ENCODE measurements at regions of chr4 and their contacts with region 1.

Region 1: GRCh38 chr4:112532267-112532666 is 16.3 kb upstream of the NEUROG2 start:
- DNase-seq: peak; percentile 19
- H3K4me3 ChIP-seq: no peak overlapping the region
- H3K27ac ChIP-seq: no peak overlapping the region
- H3K4me1 ChIP-seq: no peaks in the 10 kb centered on the region
- H3K27me3 ChIP-seq: no peaks in the 10 kb centered on the region
- CTCF ChIP-seq: no peak

Region 2: GRCh38 chr4:112075129-112075753 is 457.0 kb before region 1 on chr4:
- CTCF ChIA-PET with region 1: no interaction called
- dilution Hi-C with region 1: no loop called
- in situ Hi-C with region 1: loop called in 1 of 2 experiments (anchors 25 kb)
- intact Hi-C with region 1: no loop called
- DNase-seq: peak; percentile 59
- H3K4me3 ChIP-seq: no peak overlapping the region
- H3K27ac ChIP-seq: no peak overlapping the region
- H3K4me1 ChIP-seq: peaks cover 4% of the 10 kb centered on the region
- H3K27me3 ChIP-seq: no peaks in the 10 kb centered on the region
- CTCF ChIP-seq: peak; percentile 74 to 81

Region 3: DNA sequence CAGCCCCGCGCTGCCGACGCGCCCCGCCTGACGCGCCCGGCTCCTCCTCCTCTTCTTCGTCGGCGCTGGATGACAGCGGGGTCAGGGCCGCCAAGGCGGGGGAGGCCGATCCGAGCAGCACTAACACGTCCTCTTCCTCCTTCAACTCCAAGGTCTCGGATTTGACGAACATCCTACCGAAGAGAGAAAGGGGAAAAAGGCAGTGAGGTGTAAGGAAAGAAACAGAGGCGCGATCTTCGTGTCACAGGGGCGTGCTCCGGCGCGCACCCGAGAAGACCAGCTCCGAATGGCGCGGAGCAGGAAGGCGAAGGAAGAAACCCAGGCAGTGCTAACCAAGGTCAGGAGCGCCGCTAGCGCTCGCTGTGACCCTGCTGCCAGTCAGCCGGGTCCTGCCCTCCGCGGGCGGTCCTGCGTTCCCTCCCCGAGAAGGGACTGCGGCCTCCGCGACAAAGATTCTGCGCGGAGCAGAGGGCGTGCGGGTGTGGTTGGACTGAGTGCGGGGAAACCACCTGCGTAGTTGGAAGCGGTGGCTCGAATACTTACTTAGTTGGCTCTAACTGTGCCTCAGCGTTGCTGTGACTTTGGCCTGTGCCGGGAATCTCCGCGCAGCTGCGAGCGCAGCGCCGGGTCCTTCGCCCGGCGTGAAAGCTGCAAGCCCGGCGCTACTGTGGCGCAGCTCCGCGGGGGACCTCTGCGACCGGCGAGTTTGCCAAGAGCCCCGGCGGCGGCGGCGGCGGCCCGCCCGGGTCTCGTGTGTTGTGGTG is 16.8 kb before region 1 on chr4:
- CTCF ChIA-PET with region 1: no interaction called
- dilution Hi-C with region 1: no loop called
- in situ Hi-C with region 1: no loop called
- intact Hi-C with region 1: no loop called
- DNase-seq: peak; percentile 47
- H3K4me3 ChIP-seq: peak overlapping the region; percentile 25 to 56 (median 56)
- H3K27ac ChIP-seq: no peak overlapping the region
- H3K4me1 ChIP-seq: peaks cover 35% of the 10 kb centered on the region
- H3K27me3 ChIP-seq: peaks cover 53% of the 10 kb centered on the region
- CTCF ChIP-seq: no peak

Measured in mammary epithelial cell (primary cell).